ENCODE measurements at regions of chr7 and their contacts with region 1.

Region 1: GRCh38 chr7:27160546-27161213 is 4.2 kb upstream of the HOXA7 start:
- DNase-seq: peak; percentile 92
- H3K4me3 ChIP-seq: peak overlapping the region in 2 of 3 experiments; percentile 44 to 63
- H3K27ac ChIP-seq: peak overlapping the region; percentile 69
- H3K4me1 ChIP-seq: peaks cover 42% of the 10 kb centered on the region
- H3K27me3 ChIP-seq: no peaks in the 10 kb centered on the region
- CTCF ChIP-seq: peak; percentile 95
- POLR2A ChIP-seq: no peak

Region 2: GRCh38 chr7:25894902-25895791 is 1265.5 kb before region 1 on chr7:
- CTCF ChIA-PET with region 1: interaction called, 26 read pairs
- POLR2A ChIA-PET with region 1: no interaction called
- dilution Hi-C with region 1: no loop called
- intact Hi-C with region 1: loop called (anchors 1 kb)
- DNase-seq: peak; percentile 32
- H3K4me3 ChIP-seq: no peak overlapping the region
- H3K27ac ChIP-seq: no peak overlapping the region
- H3K4me1 ChIP-seq: peaks cover 16% of the 10 kb centered on the region
- H3K27me3 ChIP-seq: peaks cover under 1 to 11% of the 10 kb centered on the region in 2 experiments
- CTCF ChIP-seq: peak; percentile 78 to 79
- POLR2A ChIP-seq: no peak

Region 3: GRCh38 chr7:26200444-26201246 is 960.0 kb before region 1 on chr7 and contains the start of gene HNRNPA2B1:
- CTCF ChIA-PET with region 1: interaction called, 3 read pairs
- POLR2A ChIA-PET with region 1: interaction called, 4 read pairs
- dilution Hi-C with region 1: loop called (anchors 25 kb)
- intact Hi-C with region 1: loop called (anchors 2 kb)
- DNase-seq: peak; percentile 99
- H3K4me3 ChIP-seq: peak within 1 kb of the TSS; percentile 98 to 100 (median 98)
- H3K27ac ChIP-seq: peak within 1 kb of the TSS; percentile 97
- H3K4me1 ChIP-seq: peaks cover 40% of the 10 kb centered on the region
- H3K27me3 ChIP-seq: no peaks in the 10 kb centered on the region
- CTCF ChIP-seq: no peak
- POLR2A ChIP-seq: peak; percentile 100
- total RNA-seq, gene HNRNPA2B1: 703 and 717 TPM in 2 replicates

Region 4: GRCh38 chr7:26417911-26418413 is 742.7 kb before region 1 on chr7:
- CTCF ChIA-PET with region 1: interaction called, 3 read pairs
- POLR2A ChIA-PET with region 1: no interaction called
- dilution Hi-C with region 1: no loop called
- intact Hi-C with region 1: loop called (anchors 5 kb)
- DNase-seq: peak; percentile 98
- H3K4me3 ChIP-seq: peak overlapping the region in 1 of 3 experiments; percentile 30
- H3K27ac ChIP-seq: peak overlapping the region; percentile 99
- H3K4me1 ChIP-seq: peaks cover 23% of the 10 kb centered on the region
- H3K27me3 ChIP-seq: no peaks in the 10 kb centered on the region
- CTCF ChIP-seq: no peak
- POLR2A ChIP-seq: no peak

Region 5: DNA sequence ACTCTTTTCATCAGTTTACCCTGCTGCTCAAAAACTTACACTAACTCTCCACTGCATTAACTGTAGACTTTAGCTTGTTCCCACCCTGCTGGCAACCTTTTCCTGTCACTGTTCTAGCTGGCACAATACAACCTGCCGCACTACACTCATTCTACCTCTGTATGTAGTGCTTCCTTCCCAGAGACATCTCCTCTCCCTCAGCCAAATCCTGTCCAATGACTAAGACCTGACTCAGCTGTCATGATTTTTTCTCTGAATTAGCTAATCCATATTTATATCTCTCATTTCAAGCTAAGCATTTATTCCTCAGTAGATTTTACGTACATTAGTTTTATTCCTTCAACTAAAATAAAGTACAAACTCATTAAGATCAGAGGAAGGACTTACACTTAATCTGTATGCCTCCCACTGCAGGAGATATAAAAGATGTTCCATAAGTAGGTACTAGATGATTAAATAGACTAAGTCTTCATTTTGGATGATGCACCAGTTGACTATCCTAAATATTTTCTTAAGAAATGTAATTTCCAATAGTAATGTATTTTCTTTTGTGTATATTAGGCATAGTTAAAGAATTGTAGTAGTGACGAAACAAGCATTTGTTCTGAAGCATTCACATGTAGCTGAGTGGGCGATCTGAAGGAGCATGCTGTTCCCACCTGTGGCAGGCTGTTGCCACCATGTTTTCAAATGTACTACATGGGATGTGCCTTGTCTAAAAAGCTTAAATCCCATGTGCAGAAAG is 485.4 kb before region 1 on chr7:
- CTCF ChIA-PET with region 1: interaction called, 49 read pairs
- POLR2A ChIA-PET with region 1: no interaction called
- dilution Hi-C with region 1: no loop called
- intact Hi-C with region 1: no loop called
- DNase-seq: peak; percentile 46
- H3K4me3 ChIP-seq: no peak overlapping the region
- H3K27ac ChIP-seq: no peak overlapping the region
- H3K4me1 ChIP-seq: peaks cover 11% of the 10 kb centered on the region
- H3K27me3 ChIP-seq: no peaks in the 10 kb centered on the region
- CTCF ChIP-seq: no peak
- POLR2A ChIP-seq: no peak

Region 6: DNA sequence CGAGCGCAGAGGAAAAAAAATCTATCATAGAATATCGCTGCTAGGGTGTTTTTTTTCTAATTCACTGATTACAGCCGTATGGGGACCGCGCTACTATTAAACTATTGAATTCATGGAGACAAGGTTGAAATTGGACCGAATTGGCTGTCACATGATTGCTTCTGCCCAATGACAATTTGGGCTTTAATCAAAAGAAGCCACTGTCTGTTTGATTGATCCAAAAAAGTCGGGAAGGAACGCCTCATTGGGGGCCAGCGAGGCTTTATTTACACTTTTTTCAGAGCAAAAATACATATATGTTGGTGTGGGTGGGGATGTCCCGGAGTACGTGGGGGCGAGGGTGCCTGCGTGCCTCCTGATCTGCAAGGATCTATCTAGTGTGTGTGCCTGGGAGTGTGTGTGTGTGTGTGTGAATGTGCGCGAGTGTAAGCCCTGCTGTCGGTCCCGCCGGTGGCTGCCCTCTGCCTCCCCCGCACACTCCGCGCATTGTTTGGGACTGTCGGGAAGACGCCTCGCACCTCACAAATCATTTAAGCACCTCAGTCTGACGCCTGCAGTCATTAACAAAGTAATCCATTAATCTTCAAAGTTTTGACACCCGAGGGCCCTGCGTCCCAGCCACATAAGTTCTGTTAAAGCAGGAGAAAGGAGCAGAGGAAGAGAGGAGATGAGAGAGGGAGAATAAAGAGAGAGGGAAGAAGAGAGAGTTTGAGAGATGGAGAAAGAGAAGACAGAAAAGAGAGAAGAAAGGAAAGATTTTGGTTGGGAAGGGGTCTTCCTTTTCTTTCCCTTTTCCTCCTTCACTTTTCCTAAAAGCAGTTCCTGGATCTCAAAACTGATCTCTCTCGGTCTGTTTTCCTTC is 57.9 kb before region 1 on chr7 and contains the start of gene HOXA2:
- CTCF ChIA-PET with region 1: interaction called, 8 read pairs
- POLR2A ChIA-PET with region 1: no interaction called
- dilution Hi-C with region 1: no loop called
- intact Hi-C with region 1: loop called (anchors 2 kb)
- DNase-seq: peak; percentile 86
- H3K4me3 ChIP-seq: peak within 1 kb of the TSS; percentile 35 to 92 (median 45)
- H3K27ac ChIP-seq: peak within 1 kb of the TSS; percentile 93
- H3K4me1 ChIP-seq: peaks cover 90% of the 10 kb centered on the region
- H3K27me3 ChIP-seq: no peaks in the 10 kb centered on the region
- CTCF ChIP-seq: no peak
- POLR2A ChIP-seq: no peak
- total RNA-seq, gene HOXA2: 2.2 and 2.3 TPM in 2 replicates

Region 7: GRCh38 chr7:27179503-27180430 is 19.1 kb after region 1 on chr7:
- CTCF ChIA-PET with region 1: interaction called, 81 read pairs
- POLR2A ChIA-PET with region 1: interaction called, 7 read pairs
- dilution Hi-C with region 1: no loop called
- intact Hi-C with region 1: loop called (anchors 1 kb)
- DNase-seq: peak; percentile 90
- H3K4me3 ChIP-seq: peak overlapping the region; percentile 53 to 94 (median 69)
- H3K27ac ChIP-seq: peak overlapping the region; percentile 96
- H3K4me1 ChIP-seq: peaks cover 65% of the 10 kb centered on the region
- H3K27me3 ChIP-seq: no peaks in the 10 kb centered on the region
- CTCF ChIP-seq: peak; percentile 93 to 97
- POLR2A ChIP-seq: no peak

Region 8: GRCh38 chr7:27262121-27262520 is 101.4 kb after region 1 on chr7:
- CTCF ChIA-PET with region 1: no interaction called
- POLR2A ChIA-PET with region 1: no interaction called
- dilution Hi-C with region 1: no loop called
- intact Hi-C with region 1: no loop called
- DNase-seq: no peak
- H3K4me3 ChIP-seq: no peak overlapping the region
- H3K27ac ChIP-seq: no peak overlapping the region
- H3K4me1 ChIP-seq: no peaks in the 10 kb centered on the region
- H3K27me3 ChIP-seq: peaks cover 8 to 26% of the 10 kb centered on the region in 2 experiments
- CTCF ChIP-seq: no peak
- POLR2A ChIP-seq: no peak

Measured in endothelial cell of umbilical vein (primary cell).